Heart right ventricle (tissue), 16 donors: ENCODE measurements at regions of chrX and their contacts with region 1.

Region 1: DNA sequence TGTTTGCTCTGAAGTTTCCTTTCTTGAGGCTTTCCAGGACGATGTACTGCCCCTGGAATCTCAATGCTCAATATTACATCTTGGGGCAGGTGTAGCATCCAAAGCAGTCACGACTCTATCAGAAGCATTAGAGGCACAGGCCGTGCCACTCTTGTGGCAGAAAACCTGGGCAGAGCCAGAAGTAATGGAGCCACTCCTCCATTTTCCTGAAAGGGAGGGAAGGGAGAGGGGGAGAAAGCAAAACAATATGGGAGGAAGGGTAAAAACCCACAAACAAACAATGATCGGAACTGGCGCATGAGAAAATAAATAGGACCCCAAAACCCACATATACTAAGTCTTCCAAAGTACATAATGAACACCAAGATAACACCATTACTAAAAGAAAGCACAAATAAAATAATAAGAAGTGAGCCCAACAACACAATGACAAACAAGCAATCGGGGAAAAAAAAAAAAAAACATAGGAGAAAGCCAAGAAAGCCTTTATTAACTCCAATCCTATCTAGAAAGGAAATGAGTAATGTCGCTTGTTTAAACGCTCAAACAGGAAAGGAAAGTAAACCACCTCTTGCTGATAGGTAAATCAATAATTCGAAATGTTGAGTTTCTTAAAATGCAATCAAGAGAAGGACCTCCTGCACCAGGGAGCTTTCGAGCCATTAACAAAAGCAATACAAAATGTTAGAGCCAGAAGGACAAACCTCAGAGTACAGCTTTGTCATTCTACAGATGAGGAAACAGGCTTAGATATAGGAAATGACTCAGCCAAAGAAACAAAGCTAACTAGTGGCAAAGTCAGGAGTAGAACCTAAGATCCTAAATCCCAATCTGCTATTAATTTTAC is 117.4 kb downstream of the ATRX start:
- DNase-seq: no peak
- ATAC-seq: peak in 5 of 8 donors; percentile 35 to 78 (median 49)
- H3K4me3 ChIP-seq: peak overlapping the region in 1 of 10 donors; percentile 2
- H3K27ac ChIP-seq: peak overlapping the region in 7 of 10 donors; percentile 3 to 51 (median 13)
- H3K4me1 ChIP-seq: peaks cover 0 to 6% (median 0%) of the 10 kb centered on the region in 9 donors
- H3K27me3 ChIP-seq: no peaks in the 10 kb centered on the region
- CTCF ChIP-seq: no peak

Region 2: DNA sequence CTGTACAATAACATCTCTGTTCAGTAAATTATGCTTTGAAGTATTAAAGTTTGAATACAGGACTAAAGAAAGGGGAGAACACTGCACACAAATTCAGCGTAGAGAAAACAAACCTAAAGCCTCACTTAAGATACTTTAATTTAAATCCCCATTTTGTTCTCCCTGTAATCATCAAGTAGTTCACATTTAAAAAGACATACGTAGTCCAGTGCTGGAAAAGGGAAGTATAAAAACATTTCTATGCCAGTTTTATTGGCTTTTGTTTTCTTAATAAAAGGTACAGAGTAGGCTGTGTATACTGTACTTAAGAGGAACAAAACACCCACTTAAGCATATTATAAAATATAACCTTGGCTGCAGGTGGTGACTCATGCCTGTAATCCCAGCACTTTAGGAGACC is 119.9 kb before region 1 on chrX:
- intact Hi-C with region 1: no loop called
- DNase-seq: no peak
- ATAC-seq: no peak
- H3K4me3 ChIP-seq: no peak overlapping the region
- H3K27ac ChIP-seq: no peak overlapping the region
- H3K4me1 ChIP-seq: no peaks in the 10 kb centered on the region
- H3K27me3 ChIP-seq: no peaks in the 10 kb centered on the region
- CTCF ChIP-seq: no peak

Region 3: GRCh38 chrX:77785486-77786364 is 117.1 kb after region 1 on chrX and contains the start of gene ATRX:
- intact Hi-C with region 1: loop called in 1 of 10 experiments (anchors 10 kb)
- DNase-seq: peak; percentile 64 to 70
- ATAC-seq: peak; percentile 90 to 97 (median 95)
- H3K4me3 ChIP-seq: peak within 1 kb of the TSS; percentile 15 to 77 (median 68)
- H3K27ac ChIP-seq: peak within 1 kb of the TSS; percentile 52 to 94 (median 89)
- H3K4me1 ChIP-seq: peaks cover 0 to 31% (median 4%) of the 10 kb centered on the region in 9 donors
- H3K27me3 ChIP-seq: no peaks in the 10 kb centered on the region
- CTCF ChIP-seq: no peak
- total RNA-seq, gene ATRX: 71.2 to 107 (median 92.4) TPM